Naive thymus-derived CD4-positive, alpha-beta T cell (primary cell): ENCODE measurements at regions of chr7 and their contacts with region 1.

Region 1: GRCh38 chr7:93117852-93118530 is at the start of gene SAMD9:
- DNase-seq: peak in 8 of 9 donors; percentile 28 to 85 (median 78)
- ATAC-seq: peak; percentile 99
- H3K4me3 ChIP-seq: peak within 1 kb of the TSS; percentile 52
- H3K4me3 Mint-ChIP-seq: peak within 1 kb of the TSS; percentile 78 to 97 (median 92)
- H3K27ac ChIP-seq: peak within 1 kb of the TSS; percentile 82
- H3K27ac Mint-ChIP-seq: peak within 1 kb of the TSS; percentile 85 to 98 (median 93)
- H3K4me1 ChIP-seq: peaks cover 12 to 20% of the 10 kb centered on the region in 2 donors
- H3K4me1 Mint-ChIP-seq: peaks cover 38 to 56% (median 48%) of the 10 kb centered on the region in 7 donors
- H3K27me3 ChIP-seq: no peaks in the 10 kb centered on the region
- H3K27me3 Mint-ChIP-seq: no peaks in the 10 kb centered on the region
- total RNA-seq, gene SAMD9: 20.9 to 61.6 (median 47.8) TPM

Region 2: GRCh38 chr7:92245487-92246362 is 872.3 kb before region 1 on chr7 and contains the starts of genes ANKIB1 and KRIT1:
- CTCF ChIA-PET with region 1: no interaction called
- POLR2A ChIA-PET with region 1: interaction called, 3 read pairs
- intact Hi-C with region 1: loop called in 1 of 2 experiments (anchors 5 kb)
- DNase-seq: peak; percentile 68 to 88 (median 86)
- ATAC-seq: peak; percentile 87
- H3K4me3 ChIP-seq: peak within 1 kb of the TSS; percentile 80
- H3K4me3 Mint-ChIP-seq: peak within 1 kb of the TSS; percentile 97 to 100 (median 98)
- H3K27ac ChIP-seq: peak within 1 kb of the TSS; percentile 92
- H3K27ac Mint-ChIP-seq: peak within 1 kb of the TSS; percentile 98 to 100 (median 100)
- H3K4me1 ChIP-seq: peaks cover 15 to 22% of the 10 kb centered on the region in 2 donors
- H3K4me1 Mint-ChIP-seq: peaks cover 30 to 64% (median 45%) of the 10 kb centered on the region in 7 donors
- H3K27me3 ChIP-seq: no peaks in the 10 kb centered on the region
- H3K27me3 Mint-ChIP-seq: no peaks in the 10 kb centered on the region
- total RNA-seq, gene ANKIB1: 54.8 to 98.6 (median 68.2) TPM
- total RNA-seq, gene KRIT1: 45.7 to 78.7 (median 48.6) TPM

Region 3: GRCh38 chr7:92682903-92683539 is 435.0 kb before region 1 on chr7:
- CTCF ChIA-PET with region 1: no interaction called
- POLR2A ChIA-PET with region 1: no interaction called
- intact Hi-C with region 1: loop called (anchors 5 kb)
- DNase-seq: peak in 7 of 9 donors; percentile 20 to 62 (median 46)
- ATAC-seq: peak; percentile 70
- H3K4me3 ChIP-seq: no peak overlapping the region
- H3K4me3 Mint-ChIP-seq: peak overlapping the region; percentile 22 to 66 (median 58)
- H3K27ac ChIP-seq: peak overlapping the region; percentile 70
- H3K27ac Mint-ChIP-seq: peak overlapping the region; percentile 27 to 87 (median 81)
- H3K4me1 ChIP-seq: peaks cover 32 to 54% of the 10 kb centered on the region in 2 donors
- H3K4me1 Mint-ChIP-seq: peaks cover 51 to 89% (median 86%) of the 10 kb centered on the region in 7 donors
- H3K27me3 ChIP-seq: no peaks in the 10 kb centered on the region
- H3K27me3 Mint-ChIP-seq: no peaks in the 10 kb centered on the region

Region 4: GRCh38 chr7:93055543-93056107 is 62.4 kb before region 1 on chr7:
- CTCF ChIA-PET with region 1: no interaction called
- POLR2A ChIA-PET with region 1: no interaction called
- intact Hi-C with region 1: loop called in 1 of 2 experiments (anchors 2 kb)
- DNase-seq: peak in 6 of 9 donors; percentile 14 to 57 (median 41)
- ATAC-seq: peak; percentile 77
- H3K4me3 ChIP-seq: no peak overlapping the region
- H3K4me3 Mint-ChIP-seq: no peak overlapping the region
- H3K27ac ChIP-seq: no peak overlapping the region
- H3K27ac Mint-ChIP-seq: no peak overlapping the region
- H3K4me1 ChIP-seq: no peaks in the 10 kb centered on the region
- H3K4me1 Mint-ChIP-seq: peaks cover 0 to 16% (median 7%) of the 10 kb centered on the region in 7 donors
- H3K27me3 ChIP-seq: no peaks in the 10 kb centered on the region
- H3K27me3 Mint-ChIP-seq: peaks cover 0 to 12% (median 6%) of the 10 kb centered on the region in 5 donors

Region 5: DNA sequence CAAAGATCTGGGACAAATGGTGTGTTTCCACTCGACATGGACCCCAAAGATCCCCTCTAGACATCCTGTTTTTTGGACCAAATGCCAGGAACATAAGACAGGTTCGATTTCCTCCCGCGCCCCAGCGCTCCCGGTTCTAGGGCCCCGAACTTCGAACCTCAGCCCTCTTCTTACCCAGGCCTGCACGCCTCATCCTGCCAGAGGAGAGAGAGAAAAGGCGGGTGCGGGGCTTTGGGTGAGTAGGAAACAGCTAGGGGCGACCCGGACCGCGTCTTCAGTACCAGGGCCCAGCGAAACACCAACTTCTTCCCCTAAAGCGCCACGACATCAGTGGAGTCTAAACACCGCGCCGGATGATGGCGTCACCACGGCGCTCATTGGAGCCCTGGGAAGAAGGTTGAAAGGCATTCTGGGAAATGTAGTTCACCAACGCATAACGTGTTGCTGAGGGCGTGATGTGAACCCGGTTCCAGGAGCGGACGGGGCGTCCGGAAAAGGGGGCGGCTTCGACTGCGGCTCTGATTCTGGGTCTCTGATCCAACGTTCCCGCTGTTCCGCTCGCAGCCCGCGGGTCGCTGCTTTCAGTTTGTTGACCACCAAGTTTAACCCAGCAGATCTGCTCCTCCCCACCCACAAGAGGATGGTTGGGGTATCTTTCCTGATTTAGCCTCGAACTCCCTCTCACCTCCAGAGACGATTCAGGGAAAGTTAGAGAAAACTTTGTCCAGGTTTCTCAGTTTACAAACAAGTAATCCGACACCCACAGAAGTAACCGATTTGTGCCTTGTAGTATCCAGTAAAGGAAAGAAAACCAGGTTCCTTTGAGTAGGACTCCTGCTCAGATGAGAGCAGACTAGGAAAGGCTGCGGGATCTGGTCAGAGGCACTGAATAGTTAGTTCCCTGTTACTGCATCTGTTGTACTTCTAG is 886.3 kb after region 1 on chr7 and contains the start of gene BET1:
- CTCF ChIA-PET with region 1: no interaction called
- POLR2A ChIA-PET with region 1: no interaction called
- intact Hi-C with region 1: loop called in 1 of 2 experiments (anchors 1 kb)
- DNase-seq: peak; percentile 87 to 96 (median 92)
- ATAC-seq: peak; percentile 98
- H3K4me3 ChIP-seq: peak within 1 kb of the TSS; percentile 75
- H3K4me3 Mint-ChIP-seq: peak within 1 kb of the TSS; percentile 88 to 100 (median 99)
- H3K27ac ChIP-seq: peak within 1 kb of the TSS; percentile 91
- H3K27ac Mint-ChIP-seq: peak within 1 kb of the TSS; percentile 95 to 100 (median 99)
- H3K4me1 ChIP-seq: peaks cover 3 to 17% of the 10 kb centered on the region in 2 donors
- H3K4me1 Mint-ChIP-seq: peaks cover 22 to 56% (median 51%) of the 10 kb centered on the region in 7 donors
- H3K27me3 ChIP-seq: no peaks in the 10 kb centered on the region
- H3K27me3 Mint-ChIP-seq: peaks cover 0 to 28% (median 11%) of the 10 kb centered on the region in 5 donors
- total RNA-seq, gene BET1: 9.9 to 37.6 (median 25.2) TPM